HEK293T (cell line): ENCODE measurements at regions of chr3 and their contacts with region 1.

Region 1: GRCh38 chr3:48446425-48447193 is at the start of gene ATRIP:
- DNase-seq: peak; percentile 93

Region 2: DNA sequence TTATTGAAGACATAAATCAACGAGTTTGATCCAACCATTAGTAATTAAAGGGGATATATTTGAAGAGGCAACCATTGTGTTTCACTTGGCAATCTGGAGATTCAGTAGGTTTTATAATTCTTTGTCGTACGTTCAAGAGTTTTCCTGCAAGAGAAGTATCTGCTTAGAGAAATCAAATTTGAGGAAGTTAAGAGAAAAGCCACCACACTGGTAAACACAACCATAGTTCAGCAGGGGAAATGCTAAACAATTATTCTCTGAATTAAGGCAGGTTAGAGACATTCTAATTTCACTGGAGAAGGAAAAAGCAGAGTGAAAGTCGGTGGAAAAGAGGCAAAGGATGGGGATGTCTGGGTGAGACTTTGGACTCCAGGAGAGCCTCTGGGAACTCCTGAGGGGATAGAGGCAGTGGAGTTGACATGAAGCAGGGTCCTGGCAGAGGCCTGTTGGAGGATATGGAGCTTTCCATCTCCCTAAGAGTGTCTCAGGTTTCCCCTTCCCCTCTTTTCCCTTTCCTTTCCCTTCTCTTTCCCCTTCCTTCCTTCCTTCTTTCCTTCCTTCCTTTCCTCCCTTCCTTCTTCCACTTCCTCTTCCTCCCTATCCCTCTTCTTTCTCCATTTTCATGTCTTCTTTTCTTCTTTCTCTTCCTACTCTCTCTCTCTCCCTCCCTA is 139.6 kb before region 1 on chr3:
- CTCF ChIA-PET with region 1: no interaction called
- POLR2A ChIA-PET with region 1: no interaction called
- DNase-seq: no peak

Region 3: DNA sequence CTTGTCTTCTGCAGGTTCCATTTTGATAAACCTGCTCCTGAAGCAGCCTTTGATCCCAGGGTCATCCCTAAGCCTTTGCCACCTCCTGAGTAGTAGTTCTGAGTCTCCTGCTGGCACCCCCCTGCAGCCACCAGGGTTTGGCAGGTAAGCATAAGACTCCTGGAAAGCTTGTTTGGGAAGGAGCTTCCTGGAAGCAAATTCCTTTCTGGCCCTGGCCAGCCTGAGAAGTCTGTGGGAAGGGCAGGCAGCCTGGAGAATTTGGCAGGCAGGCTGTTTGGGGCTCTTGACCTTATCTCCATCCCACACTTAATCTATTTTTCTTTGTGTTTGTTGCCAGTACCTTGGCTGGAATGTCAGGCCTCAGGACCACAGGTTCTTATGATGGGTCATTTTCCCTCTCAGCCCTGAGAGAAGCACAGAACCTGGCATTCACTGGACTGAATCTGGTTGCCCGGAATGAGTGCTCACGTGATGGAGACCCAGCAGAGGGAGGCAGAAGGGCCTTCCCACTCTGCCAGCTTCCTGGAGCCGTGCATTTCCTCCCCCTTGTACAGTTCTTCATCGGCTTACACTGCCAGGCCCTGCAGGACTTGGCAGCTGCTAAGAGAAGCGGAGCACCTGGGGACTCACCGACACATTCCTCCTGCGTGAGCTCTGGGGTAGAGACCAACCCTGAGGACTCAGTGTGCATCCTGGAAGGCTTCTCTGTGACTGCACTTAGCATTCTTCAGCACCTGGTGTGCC is 13.3 kb after region 1 on chr3:
- CTCF ChIA-PET with region 1: no interaction called
- POLR2A ChIA-PET with region 1: interaction called, 10 read pairs
- DNase-seq: no peak